ENCODE measurements at regions of chr17 and their contacts with region 1.

Region 1: DNA sequence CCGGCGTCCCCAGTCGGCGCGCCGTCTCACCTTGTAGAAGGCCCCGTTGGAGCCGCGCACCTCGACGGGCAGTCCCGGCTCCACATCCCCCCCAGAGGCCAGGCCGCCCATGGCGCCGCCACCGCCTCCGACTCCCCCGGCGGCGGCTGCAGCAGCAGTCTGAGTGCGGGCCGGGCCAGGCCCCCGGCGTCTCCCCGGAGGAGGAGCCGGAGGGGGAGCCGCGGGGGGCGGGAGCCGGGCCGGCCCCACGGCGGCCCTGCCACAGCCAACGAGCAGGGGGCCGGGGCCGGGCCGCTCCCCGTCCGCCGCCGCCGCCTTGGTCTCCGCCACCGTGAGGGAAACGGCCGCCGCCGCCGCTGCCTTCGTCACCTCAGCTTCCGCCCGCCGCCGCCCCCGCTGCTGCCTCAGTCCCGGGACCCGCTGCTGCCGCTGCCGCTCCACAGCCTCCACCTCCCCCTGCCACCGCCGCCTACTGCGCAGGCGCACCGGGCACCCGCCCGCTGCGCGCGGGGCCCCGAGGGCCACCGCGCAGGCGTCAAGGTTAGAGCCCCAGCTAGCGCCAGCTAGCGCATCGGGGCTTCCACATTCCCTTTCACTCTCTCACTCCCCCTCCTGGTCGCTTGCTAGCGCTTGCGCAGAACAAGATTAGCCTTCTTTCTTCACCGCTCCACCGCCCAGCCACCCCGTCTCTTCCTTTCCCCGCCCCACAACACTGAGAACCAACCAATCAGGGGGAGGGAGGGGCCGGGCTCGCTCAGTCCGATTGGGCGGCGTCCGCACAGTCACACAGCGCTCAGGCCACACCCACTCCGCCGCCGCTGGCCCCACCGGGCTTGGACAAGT is at the start of gene FXR2:
- DNase-seq: peak; percentile 99

Region 2: DNA sequence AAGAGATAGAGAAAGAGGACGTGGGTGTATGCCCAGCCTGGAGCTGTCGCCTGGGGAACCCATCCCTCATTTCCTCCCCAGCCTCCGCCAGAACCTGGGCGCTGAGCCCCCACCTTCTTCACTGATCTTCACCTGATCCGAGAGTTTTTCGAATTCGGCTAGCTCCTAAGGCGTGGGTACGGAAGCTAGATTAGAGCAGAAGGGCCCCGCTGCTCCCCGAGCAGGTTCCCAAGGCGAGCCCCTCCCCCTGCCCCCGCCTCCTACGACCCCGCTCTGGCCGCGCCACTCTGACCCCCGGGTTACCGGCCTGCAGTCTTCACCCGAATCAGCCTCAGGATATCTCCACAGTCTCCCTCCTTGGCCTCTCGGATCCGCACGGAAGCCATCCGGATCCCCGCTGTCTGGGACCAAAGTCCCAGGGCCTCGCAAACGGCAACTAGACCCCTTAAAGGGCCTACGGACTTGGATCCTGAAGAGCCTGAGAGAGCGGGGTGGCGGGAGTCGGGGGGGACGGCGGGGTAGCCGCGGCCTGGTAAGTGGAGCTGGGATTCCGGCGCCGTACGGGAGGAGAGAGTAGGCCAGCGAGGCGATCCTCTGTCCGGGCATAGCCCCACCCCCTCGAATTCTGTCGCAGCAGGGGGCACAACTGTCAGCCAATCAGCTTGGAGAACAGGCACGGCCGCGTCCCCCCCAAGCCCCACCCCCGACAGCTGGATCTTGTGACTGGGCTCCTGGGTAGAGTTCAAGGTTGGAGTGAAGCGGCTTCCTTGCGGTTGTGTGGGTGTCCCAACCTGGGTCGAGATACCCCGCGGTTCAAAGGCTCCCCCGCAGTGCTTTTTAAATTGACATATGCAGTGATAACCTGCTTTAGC is 12.8 kb after region 1 on chr17 and contains the start of gene SAT2:
- CTCF ChIA-PET with region 1: interaction called, 4 read pairs
- POLR2A ChIA-PET with region 1: interaction called, 21 read pairs
- DNase-seq: peak; percentile 96

Region 3: DNA sequence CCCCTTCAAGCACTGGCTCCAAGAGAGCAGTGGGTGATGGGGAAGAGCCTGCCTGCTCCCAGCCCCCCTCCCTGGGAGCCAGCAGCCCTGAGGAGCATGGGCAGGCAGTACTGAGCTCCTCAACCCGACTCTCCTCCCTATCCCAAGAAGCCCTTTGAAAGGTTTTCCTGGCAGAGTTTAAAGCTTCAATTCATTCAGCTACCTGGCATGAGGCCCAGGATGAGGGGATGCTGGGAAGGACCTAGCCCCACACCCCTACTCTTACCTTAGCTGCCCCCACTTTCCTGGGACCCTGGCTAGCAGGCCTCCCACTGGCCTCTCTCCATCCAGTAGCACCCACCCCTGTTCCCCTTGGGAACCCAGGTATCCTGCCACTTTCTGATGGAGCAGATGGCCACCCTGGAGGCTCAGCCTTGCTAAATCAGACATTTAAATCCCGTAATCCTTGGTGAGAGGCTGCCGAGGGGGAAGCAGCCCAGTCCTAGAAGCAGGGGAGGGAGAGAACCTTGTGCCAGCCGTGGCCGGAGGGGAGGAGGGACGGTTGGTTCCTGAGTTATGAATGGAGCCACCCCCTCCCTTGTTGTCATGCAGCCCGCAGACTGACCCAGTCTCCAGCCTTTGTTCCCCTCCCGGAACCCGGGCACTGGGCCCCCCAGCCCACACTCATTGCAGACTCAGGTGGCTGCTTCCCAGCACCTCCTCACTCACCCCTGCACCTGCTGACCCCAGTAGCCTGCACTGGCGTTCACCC is 53.2 kb after region 1 on chr17:
- CTCF ChIA-PET with region 1: no interaction called
- POLR2A ChIA-PET with region 1: no interaction called
- DNase-seq: peak; percentile 8